ENCODE measurements at regions of chr15 and their contacts with region 1.

Region 1: GRCh38 chr15:28191832-28192231 is 92.7 kb upstream of the OCA2 start:
- DNase-seq: no peak
- ATAC-seq: no peak
- H3K4me3 ChIP-seq: no peak overlapping the region
- H3K27ac ChIP-seq: no peak overlapping the region
- H3K4me1 ChIP-seq: no peaks in the 10 kb centered on the region
- H3K27me3 ChIP-seq: no peaks in the 10 kb centered on the region
- CTCF ChIP-seq: no peak

Region 2: DNA sequence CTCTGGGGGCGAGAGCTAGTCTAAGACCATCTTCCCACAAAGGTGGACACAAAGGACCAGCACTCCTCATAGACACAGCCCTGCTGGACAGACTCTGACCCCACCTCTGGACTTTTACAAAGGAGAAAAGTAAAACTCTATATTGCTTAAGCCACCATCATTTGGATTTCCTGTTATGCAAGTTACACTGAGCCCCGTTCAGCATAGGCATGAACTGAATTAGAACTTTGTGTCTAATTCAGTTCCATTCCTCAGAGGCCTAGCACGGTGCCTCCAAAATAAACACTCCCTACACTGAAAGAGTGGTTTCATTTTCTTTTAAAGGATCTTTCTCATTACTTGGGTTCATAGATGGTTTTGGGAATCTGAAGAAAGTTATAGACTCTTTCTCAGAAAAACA is 13.5 kb before region 1 on chr15:
- CTCF ChIA-PET with region 1: no interaction called
- POLR2A ChIA-PET with region 1: interaction called, 11 read pairs
- intact Hi-C with region 1: no loop called
- DNase-seq: no peak
- ATAC-seq: no peak
- H3K4me3 ChIP-seq: no peak overlapping the region
- H3K27ac ChIP-seq: no peak overlapping the region
- H3K4me1 ChIP-seq: no peaks in the 10 kb centered on the region
- H3K27me3 ChIP-seq: no peaks in the 10 kb centered on the region
- CTCF ChIP-seq: no peak